SK-N-SH (cell line): ENCODE measurements at regions of chr4 and their contacts with region 1.

Region 1: DNA sequence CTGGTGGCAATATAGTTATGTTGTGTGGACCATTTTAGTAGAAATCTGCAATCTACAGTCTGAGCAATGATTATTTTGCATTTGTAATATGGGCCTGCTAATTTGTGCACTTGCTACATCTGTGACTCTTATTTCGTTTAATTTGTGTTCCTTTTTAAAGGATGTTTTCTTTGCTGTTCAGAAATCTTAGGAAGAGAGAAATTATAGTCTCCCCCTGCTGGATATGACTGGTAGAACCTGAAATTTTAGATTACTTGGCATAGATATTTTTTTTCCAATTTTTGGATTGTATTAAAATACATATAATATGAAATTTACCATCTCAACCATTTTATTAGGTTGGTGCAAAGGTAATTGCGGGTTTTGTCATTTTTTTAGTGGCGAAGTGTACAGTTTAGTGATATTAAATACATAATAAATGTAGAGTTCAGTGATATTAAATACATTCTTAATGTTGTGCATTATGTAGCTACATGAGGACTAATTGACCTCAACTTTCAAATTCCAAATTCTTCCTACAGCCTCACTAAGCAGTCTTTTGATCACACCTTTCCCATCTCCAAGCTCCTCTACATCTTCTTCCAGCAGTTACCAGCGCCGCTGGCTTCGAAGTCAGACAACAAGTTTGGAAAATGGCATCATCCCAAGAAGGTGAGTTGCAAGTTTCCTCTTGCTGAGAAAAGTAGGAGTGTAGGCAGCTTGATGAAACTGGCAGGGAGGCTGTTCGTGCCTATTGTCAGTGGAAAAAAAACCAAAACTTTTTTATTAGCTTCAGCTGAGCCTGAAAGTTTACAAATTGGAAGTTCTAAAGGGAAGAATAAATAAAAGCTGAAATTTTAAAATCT is 82.2 kb downstream of the FNIP2 start:
- DNase-seq: peak; percentile 41
- H3K4me3 ChIP-seq: no peak overlapping the region
- H3K27ac ChIP-seq: no peak overlapping the region
- H3K4me1 ChIP-seq: no peaks in the 10 kb centered on the region
- H3K27me3 ChIP-seq: no peaks in the 10 kb centered on the region
- CTCF ChIP-seq: peak; percentile 84
- EP300 ChIP-seq: no peak
- RAD21 ChIP-seq: peak; percentile 69

Region 2: DNA sequence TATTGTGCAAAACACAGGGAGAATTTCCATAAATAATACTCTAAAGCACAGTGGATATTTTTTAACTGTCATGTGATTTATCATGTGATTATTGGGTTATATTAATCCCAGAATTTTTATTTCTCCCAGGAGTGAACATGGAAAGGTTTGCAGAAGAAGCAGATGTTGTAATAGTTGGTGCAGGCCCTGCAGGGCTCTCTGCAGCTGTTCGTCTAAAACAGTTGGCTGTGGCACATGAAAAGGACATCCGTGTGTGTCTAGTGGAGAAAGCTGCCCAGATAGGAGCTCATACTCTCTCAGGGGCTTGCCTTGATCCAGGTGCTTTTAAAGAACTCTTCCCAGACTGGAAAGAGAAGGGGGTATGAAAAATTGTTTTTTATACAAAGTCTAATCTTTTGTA is 169.0 kb before region 1 on chr4:
- CTCF ChIA-PET with region 1: no interaction called
- POLR2A ChIA-PET with region 1: no interaction called
- DNase-seq: no peak
- H3K4me3 ChIP-seq: no peak overlapping the region
- H3K27ac ChIP-seq: no peak overlapping the region
- H3K4me1 ChIP-seq: no peaks in the 10 kb centered on the region
- H3K27me3 ChIP-seq: no peaks in the 10 kb centered on the region
- CTCF ChIP-seq: no peak
- EP300 ChIP-seq: no peak
- RAD21 ChIP-seq: no peak

Region 3: GRCh38 chr4:158729716-158730559 is 121.1 kb before region 1 on chr4:
- CTCF ChIA-PET with region 1: interaction called, 16 read pairs
- POLR2A ChIA-PET with region 1: no interaction called
- DNase-seq: peak; percentile 75
- H3K4me3 ChIP-seq: no peak overlapping the region
- H3K27ac ChIP-seq: no peak overlapping the region
- H3K4me1 ChIP-seq: no peaks in the 10 kb centered on the region
- H3K27me3 ChIP-seq: no peaks in the 10 kb centered on the region
- CTCF ChIP-seq: peak; percentile 93
- EP300 ChIP-seq: no peak
- RAD21 ChIP-seq: peak; percentile 97

Region 4: DNA sequence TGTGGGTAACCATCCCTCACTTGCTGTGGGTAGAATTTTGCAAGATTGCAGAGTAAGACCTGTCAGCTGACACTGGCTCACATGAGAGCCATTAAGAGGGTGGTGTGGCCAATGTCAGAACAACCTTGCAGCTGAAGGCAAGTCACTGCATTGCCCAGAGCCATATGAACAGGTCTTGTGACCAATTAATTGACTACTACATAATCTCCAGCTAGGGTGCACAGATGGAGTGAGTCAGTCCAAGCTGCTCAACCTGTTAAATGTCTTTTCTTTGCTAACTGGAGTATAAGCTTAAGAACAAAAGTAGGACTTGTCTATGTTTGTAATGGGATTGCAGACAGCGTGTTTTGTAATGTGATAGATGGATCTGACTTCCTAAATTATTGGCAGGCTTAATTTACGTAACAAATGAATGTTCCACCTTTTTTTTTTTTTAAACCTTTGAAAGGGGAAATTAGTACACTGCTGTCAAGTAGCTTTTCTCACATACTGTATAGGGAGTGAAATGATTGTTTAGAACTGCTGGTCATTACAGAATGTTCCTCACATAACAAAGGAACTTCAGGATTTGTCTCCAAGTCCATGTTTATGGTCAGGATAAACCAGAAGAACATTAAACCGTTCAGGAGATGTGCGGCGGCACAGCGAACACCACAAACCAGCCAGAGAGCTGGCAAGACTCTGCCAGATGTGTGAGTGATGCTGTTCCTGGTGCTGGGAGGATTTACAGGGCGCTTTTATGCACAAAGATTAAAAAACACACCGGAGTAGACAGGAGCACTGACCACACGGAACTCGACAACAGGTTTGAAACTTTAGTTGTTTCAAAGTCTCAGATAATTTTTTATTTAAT is 45.2 kb before region 1 on chr4:
- CTCF ChIA-PET with region 1: interaction called, 10 read pairs
- POLR2A ChIA-PET with region 1: no interaction called
- DNase-seq: peak; percentile 47
- H3K4me3 ChIP-seq: no peak overlapping the region
- H3K27ac ChIP-seq: peak overlapping the region in 1 of 2 experiments; percentile 34; a peak in 2 of 4 replicates
- H3K4me1 ChIP-seq: peaks cover 5 to 15% of the 10 kb centered on the region in 2 experiments; a peak in 2 of 4 replicates
- H3K27me3 ChIP-seq: no peaks in the 10 kb centered on the region
- CTCF ChIP-seq: no peak
- EP300 ChIP-seq: peak in 1 of 2 experiments; percentile 86; a peak in 2 of 4 replicates
- RAD21 ChIP-seq: no peak; the same call in none of the 2 replicates